ENCODE measurements at regions of chr1 and their contacts with region 1.

Region 1: GRCh38 chr1:65067491-65068201 is 80.4 kb upstream of the AK4 start:
- DNase-seq: peak; percentile 77 to 85 (median 81)
- H3K4me3 ChIP-seq: peak overlapping the region; percentile 83
- H3K27ac ChIP-seq: peak overlapping the region; percentile 99 to 100
- H3K4me1 ChIP-seq: peaks cover 8% of the 10 kb centered on the region
- H3K27me3 ChIP-seq: no peaks in the 10 kb centered on the region
- CTCF ChIP-seq: no peak
- EP300 ChIP-seq: no peak
- POLR2A ChIP-seq: peak; percentile 85

Region 2: DNA sequence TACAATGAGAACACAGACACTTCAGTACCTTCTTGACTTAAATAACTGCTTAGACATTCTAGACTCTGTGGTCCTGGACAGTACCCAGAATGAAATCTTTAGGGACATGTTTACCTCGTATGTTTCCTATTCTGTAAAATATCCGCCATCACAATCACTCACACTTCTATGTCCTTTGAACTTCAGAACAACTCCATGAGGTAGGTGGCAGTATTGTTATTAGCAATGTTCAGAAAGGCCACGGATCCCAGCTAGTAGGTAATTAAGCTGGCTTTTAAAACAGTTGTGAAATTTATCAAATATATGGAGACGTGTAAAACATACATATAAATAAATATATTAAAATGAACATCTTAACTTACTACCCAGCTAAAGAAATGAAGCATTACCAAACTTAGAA is 514.4 kb before region 1 on chr1:
- intact Hi-C with region 1: no loop called
- DNase-seq: no peak
- H3K4me3 ChIP-seq: no peak overlapping the region
- H3K27ac ChIP-seq: no peak overlapping the region
- H3K4me1 ChIP-seq: peaks cover 8% of the 10 kb centered on the region
- H3K27me3 ChIP-seq: no peaks in the 10 kb centered on the region
- CTCF ChIP-seq: no peak
- EP300 ChIP-seq: no peak
- POLR2A ChIP-seq: no peak

Region 3: GRCh38 chr1:65002508-65003315 is 64.9 kb before region 1 on chr1:
- intact Hi-C with region 1: loop called in 1 of 4 experiments (anchors 5 kb)
- DNase-seq: peak; percentile 92 to 96 (median 95)
- H3K4me3 ChIP-seq: peak overlapping the region; percentile 71
- H3K27ac ChIP-seq: peak overlapping the region; percentile 86 to 98
- H3K4me1 ChIP-seq: peaks cover 6% of the 10 kb centered on the region
- H3K27me3 ChIP-seq: no peaks in the 10 kb centered on the region
- CTCF ChIP-seq: no peak
- EP300 ChIP-seq: peak; percentile 48
- POLR2A ChIP-seq: peak; percentile 50

Region 4: GRCh38 chr1:65148548-65149350 is 81.1 kb after region 1 on chr1:
- intact Hi-C with region 1: loop called in 1 of 4 experiments (anchors 2 kb)
- DNase-seq: peak; percentile 19 to 61 (median 50)
- H3K4me3 ChIP-seq: peak overlapping the region; percentile 58
- H3K27ac ChIP-seq: peak overlapping the region; percentile 63 to 84
- H3K4me1 ChIP-seq: peaks cover 4% of the 10 kb centered on the region
- H3K27me3 ChIP-seq: no peaks in the 10 kb centered on the region
- CTCF ChIP-seq: no peak
- EP300 ChIP-seq: no peak
- POLR2A ChIP-seq: no peak

Region 5: DNA sequence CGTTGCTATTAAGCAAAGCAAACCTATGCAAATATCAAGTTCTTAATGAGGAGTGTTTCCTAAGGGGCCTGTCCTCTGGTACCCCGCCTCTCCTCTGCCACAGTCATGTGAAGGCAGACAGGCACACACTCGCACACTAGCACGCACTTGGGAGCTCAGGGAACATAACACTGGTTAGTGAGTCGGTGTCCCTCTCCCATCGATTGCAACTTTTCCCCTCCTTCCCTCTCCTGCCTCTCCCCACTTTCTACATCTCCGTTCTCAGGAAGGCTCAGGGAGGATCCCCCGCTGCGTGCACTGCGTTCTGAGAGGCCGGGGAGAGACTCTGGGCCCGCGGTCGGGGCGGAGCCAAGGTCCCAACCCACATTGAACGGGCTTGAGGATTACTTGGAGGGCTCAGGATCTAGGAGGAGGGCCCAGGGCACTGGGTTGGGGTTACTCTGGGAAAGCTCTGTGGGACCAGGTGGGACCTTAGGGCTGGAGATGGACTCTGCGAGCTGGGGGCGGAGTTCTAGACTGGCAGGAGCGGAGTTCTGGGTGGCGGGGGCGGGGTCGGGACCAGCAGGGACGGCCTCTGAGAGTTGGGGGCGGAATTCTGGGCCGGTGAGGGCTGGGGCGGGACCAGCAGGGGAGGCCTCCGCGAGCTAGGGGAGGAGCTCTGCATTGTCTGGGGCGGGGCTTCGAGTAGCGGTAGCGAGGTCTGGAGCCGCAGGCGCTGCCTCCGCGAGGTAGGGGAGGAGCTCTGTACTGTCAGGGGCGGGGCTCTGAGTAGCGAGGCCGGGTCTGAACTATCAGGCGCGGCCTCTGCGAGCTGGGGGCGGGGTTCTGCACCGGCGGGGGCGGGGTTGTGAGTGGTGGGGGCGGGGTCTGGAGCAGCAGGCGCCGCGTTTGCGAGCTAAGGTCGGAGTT is 352.3 kb after region 1 on chr1:
- intact Hi-C with region 1: loop called in 2 of 4 experiments (anchors 5 to 10 kb)
- DNase-seq: peak; percentile 98 to 99 (median 99)
- H3K4me3 ChIP-seq: peak overlapping the region; percentile 95
- H3K27ac ChIP-seq: peak overlapping the region; percentile 31 to 96
- H3K4me1 ChIP-seq: peaks cover 16% of the 10 kb centered on the region
- H3K27me3 ChIP-seq: no peaks in the 10 kb centered on the region
- CTCF ChIP-seq: no peak
- EP300 ChIP-seq: no peak
- POLR2A ChIP-seq: peak; percentile 56